Lower leg skin (tissue), 4 donors: ENCODE measurements at regions of chr2 and their contacts with region 1.

Region 1: GRCh38 chr2:155412598-155412997 is 714.1 kb downstream of the KCNJ3 start:
- DNase-seq: no peak
- H3K4me3 ChIP-seq: no peak overlapping the region
- CTCF ChIP-seq: no peak
- POLR2A ChIP-seq: no peak

Region 2: DNA sequence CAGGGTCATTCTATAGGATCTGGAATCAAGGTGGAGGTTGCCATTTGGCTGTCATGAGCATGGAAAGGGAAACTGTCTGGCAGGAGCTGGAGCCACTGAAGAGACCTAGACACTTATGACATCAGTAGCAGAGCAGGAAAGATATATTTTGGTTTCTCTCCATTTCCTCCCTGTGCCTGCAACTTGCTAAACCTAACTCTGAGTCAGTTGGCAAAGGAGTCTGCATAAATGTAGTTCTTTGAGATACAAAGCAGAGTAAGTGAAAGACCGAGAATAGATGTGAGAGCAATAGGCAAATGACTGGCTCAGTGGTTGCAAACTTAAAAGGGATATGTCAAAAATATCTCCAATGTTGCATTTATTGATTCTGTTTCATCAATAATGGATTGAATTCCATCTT is 43.6 kb after region 1 on chr2:
- intact Hi-C with region 1: loop called (anchors 2 kb)
- DNase-seq: no peak
- H3K4me3 ChIP-seq: no peak overlapping the region
- CTCF ChIP-seq: no peak
- POLR2A ChIP-seq: no peak